SK-N-SH (cell line): ENCODE measurements at regions of chr11 and their contacts with region 1.

Region 1: GRCh38 chr11:30960387-30960992 is 374.3 kb upstream of the MPPED2 start:
- DNase-seq: peak; percentile 30
- H3K4me3 ChIP-seq: peak overlapping the region in 1 of 2 experiments; percentile 39; a peak in 1 of 4 replicates
- H3K27ac ChIP-seq: no peak overlapping the region
- H3K4me1 ChIP-seq: no peaks in the 10 kb centered on the region
- H3K27me3 ChIP-seq: no peaks in the 10 kb centered on the region; the same call in 1 of the 2 replicates
- CTCF ChIP-seq: peak; percentile 85
- EP300 ChIP-seq: no peak
- RAD21 ChIP-seq: peak; percentile 94

Region 2: DNA sequence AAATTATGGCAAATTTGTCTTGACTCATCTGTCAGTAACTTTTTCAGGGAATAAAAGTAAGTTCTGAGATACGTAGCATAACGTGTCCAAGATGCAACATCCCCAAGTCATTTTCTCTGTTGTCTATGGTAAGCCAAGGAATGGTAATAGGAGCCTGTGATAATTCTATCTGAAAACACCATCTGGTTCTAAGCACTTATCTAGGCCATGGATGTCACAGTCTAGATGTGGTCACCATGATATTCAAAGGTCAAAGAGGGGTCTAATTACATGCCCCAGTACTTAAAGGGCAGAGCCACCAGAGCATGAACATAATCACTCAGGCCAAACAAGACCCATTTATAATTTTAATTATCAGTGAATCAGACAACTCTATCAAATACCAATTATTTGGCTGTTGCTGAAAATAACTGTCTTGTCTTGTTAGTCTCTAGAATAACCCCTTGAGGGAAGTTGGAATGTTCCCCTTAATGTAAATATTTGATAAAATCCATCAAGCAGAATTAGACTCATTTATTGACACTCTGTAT is 149.2 kb before region 1 on chr11:
- CTCF ChIA-PET with region 1: no interaction called
- POLR2A ChIA-PET with region 1: no interaction called
- DNase-seq: no peak
- H3K4me3 ChIP-seq: no peak overlapping the region
- H3K27ac ChIP-seq: no peak overlapping the region
- H3K4me1 ChIP-seq: peaks cover 0 to 19% of the 10 kb centered on the region in 2 experiments; a peak in 2 of 4 replicates
- H3K27me3 ChIP-seq: no peaks in the 10 kb centered on the region
- CTCF ChIP-seq: no peak
- EP300 ChIP-seq: no peak
- RAD21 ChIP-seq: no peak

Region 3: DNA sequence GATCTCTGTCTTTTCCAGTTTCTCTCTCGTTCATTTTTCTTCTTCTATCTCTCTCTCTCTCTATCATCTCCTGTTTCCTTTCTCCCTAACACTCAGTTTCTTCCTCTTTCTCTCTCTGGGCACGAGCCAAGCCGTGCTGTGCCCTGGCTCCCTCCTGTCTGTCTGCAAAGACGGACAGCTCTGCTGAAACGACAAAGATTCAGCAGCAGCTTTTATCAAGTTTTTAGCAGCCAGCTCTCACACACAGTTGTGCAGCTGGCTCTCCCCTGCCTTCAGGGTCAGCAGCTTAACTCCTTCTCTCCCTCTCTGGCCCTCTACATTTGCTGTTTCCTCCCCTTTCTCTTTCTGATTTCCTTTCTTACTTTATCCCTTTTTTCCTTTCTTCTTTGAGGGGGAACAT is 22.3 kb before region 1 on chr11:
- CTCF ChIA-PET with region 1: interaction called, 10 read pairs
- POLR2A ChIA-PET with region 1: no interaction called
- DNase-seq: no peak
- H3K4me3 ChIP-seq: no peak overlapping the region
- H3K27ac ChIP-seq: no peak overlapping the region
- H3K4me1 ChIP-seq: no peaks in the 10 kb centered on the region; a peak in 1 of 4 replicates
- H3K27me3 ChIP-seq: no peaks in the 10 kb centered on the region
- CTCF ChIP-seq: no peak
- EP300 ChIP-seq: no peak
- RAD21 ChIP-seq: no peak

Region 4: GRCh38 chr11:31045335-31045734 is 84.8 kb after region 1 on chr11:
- CTCF ChIA-PET with region 1: interaction called, 120 read pairs
- POLR2A ChIA-PET with region 1: no interaction called
- DNase-seq: peak; percentile 36
- H3K4me3 ChIP-seq: no peak overlapping the region; a peak in 1 of 4 replicates
- H3K27ac ChIP-seq: no peak overlapping the region
- H3K4me1 ChIP-seq: no peaks in the 10 kb centered on the region
- H3K27me3 ChIP-seq: peaks cover 4% of the 10 kb centered on the region; the same call in 1 of the 2 replicates
- CTCF ChIP-seq: peak; percentile 65
- EP300 ChIP-seq: no peak
- RAD21 ChIP-seq: peak; percentile 61